ENCODE measurements at regions of chr5 and their contacts with region 1.

Region 1: GRCh38 chr5:178069909-178070308 is 43.4 kb upstream of the N4BP3 start:
- DNase-seq: peak; percentile 78
- H3K4me3 ChIP-seq: no peak overlapping the region
- H3K27ac ChIP-seq: no peak overlapping the region
- H3K4me1 ChIP-seq: peaks cover 2 to 18% (median 10%) of the 10 kb centered on the region in 6 donors
- H3K27me3 ChIP-seq: peaks cover 0 to 20% (median 6%) of the 10 kb centered on the region in 7 donors
- CTCF ChIP-seq: peak in 7 of 11 experiments; percentile 13 to 44 (median 29)
- POLR2A ChIP-seq: no peak

Region 2: GRCh38 chr5:177599731-177600507 is 470.0 kb before region 1 on chr5 and contains the start of gene B4GALT7:
- intact Hi-C with region 1: loop called (anchors 10 kb)
- DNase-seq: peak; percentile 96
- H3K4me3 ChIP-seq: peak within 1 kb of the TSS; percentile 73 to 94 (median 82)
- H3K27ac ChIP-seq: peak within 1 kb of the TSS; percentile 85 to 93 (median 90)
- H3K4me1 ChIP-seq: peaks cover 0 to 54% (median 29%) of the 10 kb centered on the region in 6 donors
- H3K27me3 ChIP-seq: no peaks in the 10 kb centered on the region
- CTCF ChIP-seq: peak in 1 of 11 experiments; percentile 25
- POLR2A ChIP-seq: peak in 2 of 3 donors; percentile 49 to 60
- total RNA-seq, gene B4GALT7: 26.8 to 35.6 (median 32.5) TPM

Region 3: DNA sequence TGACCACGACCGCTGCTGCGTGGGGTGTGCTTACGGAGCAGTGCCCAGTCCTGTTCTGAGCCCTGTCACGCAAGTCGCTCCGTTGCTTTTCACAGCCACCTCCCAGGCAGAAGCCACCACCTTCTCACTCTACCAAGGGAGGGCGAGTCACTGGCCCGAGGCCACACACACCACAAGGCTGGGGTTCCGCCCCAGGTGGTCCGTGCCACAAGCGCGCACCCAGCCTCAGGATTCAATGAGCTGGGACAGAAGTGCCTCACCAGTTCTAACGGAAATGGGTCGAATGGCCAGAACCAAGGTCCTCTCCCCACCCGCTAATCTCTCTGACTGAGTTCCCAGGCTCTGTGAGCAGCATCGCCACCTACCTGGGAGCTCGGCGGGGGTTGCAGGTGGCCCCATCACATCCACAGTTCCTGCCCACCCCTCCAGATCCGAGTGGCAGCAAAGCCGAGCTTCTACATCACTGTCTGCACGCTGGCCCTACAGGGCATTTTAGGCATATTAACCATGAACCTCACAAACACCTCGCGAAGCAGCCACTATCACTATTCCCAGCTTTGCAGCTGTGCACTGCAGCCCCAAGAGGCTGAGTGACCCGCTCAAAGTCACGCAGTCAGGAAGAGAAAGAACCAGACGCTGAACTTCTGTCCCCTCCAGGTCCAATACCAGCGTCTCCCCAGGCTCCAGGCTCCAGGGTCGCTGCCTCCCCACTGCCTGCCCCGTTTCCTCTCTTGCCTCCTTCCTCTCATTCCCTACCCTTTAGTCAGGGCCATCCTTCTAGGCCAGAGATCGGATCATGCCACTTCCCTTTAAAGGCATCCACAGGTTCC is 254.8 kb after region 1 on chr5:
- intact Hi-C with region 1: no loop called
- DNase-seq: peak; percentile 81
- H3K4me3 ChIP-seq: no peak overlapping the region
- H3K27ac ChIP-seq: peak overlapping the region in 1 of 8 donors; percentile 19
- H3K4me1 ChIP-seq: peaks cover 0 to 26% (median 10%) of the 10 kb centered on the region in 6 donors
- H3K27me3 ChIP-seq: peaks cover 0 to 6% (median 0%) of the 10 kb centered on the region in 7 donors
- CTCF ChIP-seq: no peak
- POLR2A ChIP-seq: no peak

Measured in spleen (tissue), 13 donors.